ENCODE measurements at regions of chr11 and their contacts with region 1.

Region 1: DNA sequence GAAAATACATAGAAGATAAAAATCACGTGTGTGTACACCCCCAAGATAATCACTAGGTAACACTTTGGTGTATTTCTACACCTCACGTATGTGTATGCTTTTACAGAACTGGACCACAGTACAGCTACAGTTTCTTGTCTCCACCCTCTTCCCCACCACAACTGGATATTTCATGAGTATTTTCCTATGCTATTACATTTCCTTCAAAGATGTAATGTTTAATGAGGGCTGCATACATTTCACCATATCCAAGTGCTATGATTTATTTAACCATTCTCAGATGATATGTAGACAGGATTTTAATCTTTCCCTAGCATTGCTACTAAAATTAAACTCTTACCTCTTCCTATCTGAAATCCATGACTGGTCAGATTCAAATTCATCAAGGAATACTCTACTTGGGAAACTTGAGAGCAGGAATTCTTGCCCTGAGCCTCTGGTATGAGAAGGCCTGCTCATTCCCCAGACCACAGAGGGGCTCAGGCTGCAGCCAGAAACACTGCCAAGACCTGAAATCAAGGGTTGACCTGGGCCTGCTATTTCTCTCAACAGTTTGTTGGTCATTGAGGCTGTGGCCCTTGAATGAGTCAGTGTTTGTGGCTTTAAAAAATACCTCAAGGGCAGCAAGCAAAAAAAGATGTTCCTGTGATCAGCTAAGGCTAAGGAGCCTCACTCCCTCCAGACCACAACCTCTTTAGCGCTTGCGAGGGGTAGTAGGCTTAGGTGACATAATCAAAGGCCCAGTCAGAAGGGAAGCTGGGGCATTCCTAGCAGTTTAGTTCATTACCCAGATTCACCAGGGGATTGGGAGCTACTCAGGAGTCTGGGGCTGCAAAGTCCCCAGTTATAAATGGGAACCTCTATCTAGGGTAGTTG is 55.5 kb downstream of the ABTB2 start:
- DNase-seq: peak; percentile 77 to 98
- H3K4me3 ChIP-seq: no peak overlapping the region
- H3K27ac ChIP-seq: peak overlapping the region; percentile 61
- H3K4me1 ChIP-seq: peaks cover 90% of the 10 kb centered on the region
- H3K27me3 ChIP-seq: no peaks in the 10 kb centered on the region
- CTCF ChIP-seq: no peak

Region 2: GRCh38 chr11:34075178-34075820 is 227.0 kb before region 1 on chr11:
- CTCF ChIA-PET with region 1: no interaction called
- POLR2A ChIA-PET with region 1: no interaction called
- intact Hi-C with region 1: no loop called
- DNase-seq: peak; percentile 21 to 87
- H3K4me3 ChIP-seq: no peak overlapping the region
- H3K27ac ChIP-seq: peak overlapping the region; percentile 92
- H3K4me1 ChIP-seq: peaks cover 43% of the 10 kb centered on the region
- H3K27me3 ChIP-seq: no peaks in the 10 kb centered on the region
- CTCF ChIP-seq: no peak

Region 3: DNA sequence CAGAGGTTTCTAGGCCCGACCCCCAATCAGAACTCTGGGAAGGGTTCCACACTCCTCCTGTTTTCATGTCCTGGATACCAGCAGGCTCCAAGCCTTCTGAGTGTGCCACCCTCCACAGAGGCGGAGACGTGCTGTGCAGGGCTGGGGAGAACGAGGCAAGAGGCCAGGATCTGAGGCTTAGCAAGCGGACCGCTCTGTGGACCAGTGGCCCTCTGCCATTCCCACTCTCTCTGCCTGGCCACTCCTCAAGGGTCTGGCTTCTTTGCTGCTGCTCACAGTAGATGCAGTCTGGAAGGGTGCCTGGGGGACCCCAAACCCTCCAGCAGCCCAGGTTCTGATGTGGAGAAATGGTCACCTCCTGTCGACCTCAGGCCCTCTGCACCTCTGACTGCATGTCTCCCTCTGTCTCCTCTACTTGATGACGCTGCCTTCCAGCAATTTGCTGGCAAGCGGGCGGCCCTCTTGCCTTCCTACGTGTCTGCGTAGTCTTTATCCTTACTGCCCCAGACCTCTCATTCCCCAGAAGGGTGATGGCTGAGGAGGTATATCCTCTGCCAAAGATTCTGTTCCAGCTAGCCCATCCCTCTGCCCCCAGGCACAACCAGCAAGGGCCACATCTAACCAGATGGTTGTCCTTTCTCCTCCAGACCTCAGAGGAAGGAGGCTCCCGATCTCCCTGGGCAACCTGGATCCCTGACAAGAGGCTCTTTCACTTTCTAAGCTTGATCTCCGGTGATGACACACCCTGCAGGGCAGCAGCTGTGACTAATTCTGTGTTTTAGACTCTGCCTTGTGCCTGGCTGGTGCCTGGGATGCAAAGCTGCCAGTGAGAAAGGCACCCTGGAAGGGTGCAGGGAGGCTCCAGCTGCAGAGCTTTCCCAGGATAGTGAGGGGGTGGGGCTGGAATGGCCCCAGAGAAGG is 109.5 kb before region 1 on chr11:
- CTCF ChIA-PET with region 1: interaction called, 3 read pairs
- POLR2A ChIA-PET with region 1: interaction called, 4 read pairs
- intact Hi-C with region 1: loop called (anchors 2 kb)
- DNase-seq: peak; percentile 83 to 85
- H3K4me3 ChIP-seq: no peak overlapping the region
- H3K27ac ChIP-seq: peak overlapping the region; percentile 25; the same call in 1 of the 2 replicates
- H3K4me1 ChIP-seq: peaks cover 37% of the 10 kb centered on the region
- H3K27me3 ChIP-seq: no peaks in the 10 kb centered on the region
- CTCF ChIP-seq: no peak

Region 4: DNA sequence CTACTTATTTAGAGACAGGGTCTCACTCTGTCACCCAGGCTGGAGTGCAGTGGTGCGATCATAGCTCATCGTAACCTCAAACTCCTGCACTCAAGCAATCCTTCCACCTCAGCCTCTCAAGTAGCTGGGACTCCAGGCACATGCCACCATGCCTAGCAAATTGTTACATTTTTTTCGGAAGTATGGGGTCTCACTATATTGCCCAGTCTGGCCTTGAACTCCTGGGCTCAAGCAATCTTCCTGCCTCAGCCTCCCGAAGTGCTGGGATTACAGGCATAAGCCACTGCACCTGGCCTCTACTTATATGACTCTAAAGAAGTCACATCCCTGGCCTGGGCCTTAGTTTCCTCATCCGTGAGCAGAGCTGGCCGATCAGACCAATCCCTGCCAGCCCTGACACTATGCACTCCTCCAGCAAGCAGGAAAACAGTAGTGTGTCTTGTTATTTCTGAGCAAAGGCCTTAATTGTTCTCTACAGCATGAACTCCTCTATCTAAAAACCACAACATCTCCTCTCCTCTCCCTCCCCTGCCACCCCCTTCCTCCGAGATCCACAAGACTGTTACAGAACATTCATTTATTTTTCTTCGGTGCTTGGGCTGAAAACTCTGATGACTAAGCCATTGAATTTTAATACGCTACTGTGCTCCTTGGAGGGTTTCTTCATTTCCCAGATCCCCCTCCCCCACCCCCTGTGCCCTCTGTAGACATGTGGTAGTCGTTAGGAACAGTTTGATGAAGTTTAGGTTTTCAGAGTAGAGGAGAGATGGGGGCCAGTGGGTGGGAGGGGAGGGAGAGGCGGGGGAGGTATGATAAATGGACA is 36.0 kb before region 1 on chr11:
- CTCF ChIA-PET with region 1: interaction called, 3 read pairs
- POLR2A ChIA-PET with region 1: no interaction called
- intact Hi-C with region 1: loop called (anchors 1 kb)
- DNase-seq: peak; percentile 35 to 64
- H3K4me3 ChIP-seq: no peak overlapping the region
- H3K27ac ChIP-seq: peak overlapping the region; percentile 48
- H3K4me1 ChIP-seq: peaks cover 70% of the 10 kb centered on the region
- H3K27me3 ChIP-seq: no peaks in the 10 kb centered on the region
- CTCF ChIP-seq: no peak

Region 5: DNA sequence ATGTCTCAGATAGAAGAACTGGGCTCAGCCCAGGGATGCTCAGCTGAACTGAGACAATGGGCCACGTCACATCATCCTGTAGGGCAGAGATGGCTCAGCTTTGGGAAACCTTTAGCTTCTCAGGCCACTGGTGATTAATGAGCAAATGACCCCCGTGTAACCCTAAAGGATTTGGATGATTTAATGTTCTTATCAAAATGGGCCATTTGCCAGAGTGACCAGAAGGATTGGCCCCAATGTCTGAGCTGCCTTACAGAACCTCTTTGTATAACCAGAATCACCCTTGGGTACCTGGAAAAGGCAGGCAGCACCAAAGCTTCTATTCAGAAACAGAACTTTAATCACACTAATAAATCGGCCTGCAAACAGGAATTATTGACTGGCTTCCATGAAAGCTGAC is 18.1 kb before region 1 on chr11:
- CTCF ChIA-PET with region 1: interaction called, 12 read pairs
- POLR2A ChIA-PET with region 1: interaction called, 3 read pairs
- intact Hi-C with region 1: no loop called
- DNase-seq: peak in 1 of 2 experiments; percentile 60
- H3K4me3 ChIP-seq: no peak overlapping the region
- H3K27ac ChIP-seq: no peak overlapping the region
- H3K4me1 ChIP-seq: peaks cover 18% of the 10 kb centered on the region
- H3K27me3 ChIP-seq: no peaks in the 10 kb centered on the region
- CTCF ChIP-seq: no peak

Region 6: GRCh38 chr11:34344768-34345539 is 42.7 kb after region 1 on chr11:
- CTCF ChIA-PET with region 1: interaction called, 4 read pairs
- POLR2A ChIA-PET with region 1: no interaction called
- intact Hi-C with region 1: loop called (anchors 1 kb)
- DNase-seq: peak; percentile 90 to 99
- H3K4me3 ChIP-seq: peak overlapping the region; percentile 40; the same call in 1 of the 2 replicates
- H3K27ac ChIP-seq: peak overlapping the region; percentile 91
- H3K4me1 ChIP-seq: peaks cover 99% of the 10 kb centered on the region
- H3K27me3 ChIP-seq: no peaks in the 10 kb centered on the region
- CTCF ChIP-seq: no peak

Region 7: DNA sequence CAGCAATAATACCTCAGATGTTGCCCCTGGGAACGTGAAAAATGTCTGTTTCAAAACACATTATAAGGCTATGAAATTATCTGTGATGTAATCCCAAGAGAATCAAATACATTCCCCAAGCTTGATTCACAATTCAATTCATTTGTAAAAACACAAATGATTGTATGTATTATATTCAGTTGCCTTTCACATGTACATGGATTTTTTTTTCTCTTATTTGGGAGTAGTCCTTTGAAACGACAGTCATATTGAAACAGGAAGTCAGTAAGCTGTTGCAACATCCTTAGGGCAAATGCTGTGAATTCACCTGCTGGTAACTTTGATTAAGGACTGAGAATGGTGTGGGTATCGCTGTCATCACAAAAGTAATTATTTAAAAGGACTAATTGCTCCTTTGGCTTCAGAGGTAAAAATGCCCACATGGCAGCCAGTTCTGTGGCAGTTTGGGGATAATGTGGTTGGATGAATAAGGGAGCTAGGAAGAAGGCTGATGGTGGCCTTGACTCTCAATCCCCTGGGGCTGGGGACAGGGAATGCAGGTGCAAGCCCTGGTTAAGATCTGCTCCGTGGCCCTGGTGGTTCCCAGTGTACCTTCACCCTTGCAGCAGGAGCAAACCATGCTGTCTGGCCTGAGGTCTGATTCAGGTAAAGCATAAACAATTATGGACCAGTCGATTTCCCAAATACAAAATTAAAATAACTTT is 331.9 kb after region 1 on chr11:
- CTCF ChIA-PET with region 1: interaction called, 15 read pairs
- POLR2A ChIA-PET with region 1: no interaction called
- intact Hi-C with region 1: no loop called
- DNase-seq: peak in 1 of 2 experiments; percentile 90
- H3K4me3 ChIP-seq: peak overlapping the region; percentile 45
- H3K27ac ChIP-seq: peak overlapping the region; percentile 91
- H3K4me1 ChIP-seq: peaks cover 100% of the 10 kb centered on the region
- H3K27me3 ChIP-seq: no peaks in the 10 kb centered on the region
- CTCF ChIP-seq: peak; percentile 41; the same call in 1 of the 2 replicates